CD4-positive, alpha-beta T cell (primary cell): ENCODE measurements at regions of chr21 and their contacts with region 1.

Region 1: GRCh38 chr21:43659136-43660000 is at the starts of genes HSF2BP and RRP1B:
- DNase-seq: peak; percentile 53 to 94 (median 74)
- ATAC-seq: peak; percentile 82
- H3K4me3 ChIP-seq: peak within 1 kb of the TSS; percentile 92
- H3K4me3 Mint-ChIP-seq: peak within 1 kb of the TSS; percentile 84
- H3K27ac ChIP-seq: peak within 1 kb of the TSS; percentile 82 to 84
- H3K27ac Mint-ChIP-seq: peak within 1 kb of the TSS; percentile 87
- H3K4me1 ChIP-seq: peaks cover 48% of the 10 kb centered on the region
- H3K4me1 Mint-ChIP-seq: peaks cover 44% of the 10 kb centered on the region
- H3K27me3 ChIP-seq: no peaks in the 10 kb centered on the region
- H3K27me3 Mint-ChIP-seq: no peaks in the 10 kb centered on the region
- CTCF ChIP-seq: no peak
- total RNA-seq, gene HSF2BP: 0.59 to 0.93 TPM
- total RNA-seq, gene RRP1B: 18.6 to 19.2 TPM

Region 2: DNA sequence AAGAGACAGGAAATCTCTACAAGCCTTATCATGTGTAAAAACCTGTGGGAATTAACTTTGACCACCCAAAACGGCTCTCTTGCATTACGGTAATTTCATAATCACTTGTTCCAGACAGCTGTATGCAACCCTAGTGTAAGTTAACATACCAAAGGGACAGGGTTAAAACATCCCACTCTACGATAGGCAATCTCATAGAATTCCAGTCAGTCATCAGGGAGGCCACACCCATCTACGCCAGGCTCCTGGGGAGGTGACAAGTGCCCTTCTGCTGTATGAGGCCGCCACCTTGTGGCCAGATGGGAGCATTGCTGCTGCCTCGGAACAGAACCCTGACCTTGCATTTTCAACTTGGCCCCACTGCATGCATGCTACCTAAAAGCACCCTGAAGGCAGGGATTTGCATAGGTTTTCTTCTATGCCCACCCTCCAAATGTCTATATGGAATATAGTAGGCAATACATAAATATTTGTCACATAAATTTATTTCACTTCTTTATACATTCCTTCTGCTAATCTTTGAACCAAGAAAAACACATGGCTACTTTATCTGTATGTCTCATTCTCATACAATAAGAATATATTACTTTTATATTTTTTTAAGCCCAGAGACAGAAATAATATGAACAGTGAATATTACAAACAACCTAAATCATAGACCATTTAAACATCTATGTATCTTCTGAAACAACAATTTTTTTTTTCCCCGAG is 12.7 kb before region 1 on chr21:
- CTCF ChIA-PET with region 1: no interaction called
- POLR2A ChIA-PET with region 1: interaction called, 5 read pairs
- intact Hi-C with region 1: loop called in 1 of 2 experiments (anchors 1 kb)
- DNase-seq: peak; percentile 76 to 92 (median 80)
- ATAC-seq: peak; percentile 99
- H3K4me3 ChIP-seq: no peak overlapping the region
- H3K4me3 Mint-ChIP-seq: no peak overlapping the region
- H3K27ac ChIP-seq: no peak overlapping the region
- H3K27ac Mint-ChIP-seq: no peak overlapping the region
- H3K4me1 ChIP-seq: peaks cover 3% of the 10 kb centered on the region
- H3K4me1 Mint-ChIP-seq: peaks cover 18% of the 10 kb centered on the region
- H3K27me3 ChIP-seq: no peaks in the 10 kb centered on the region
- H3K27me3 Mint-ChIP-seq: no peaks in the 10 kb centered on the region
- CTCF ChIP-seq: peak; percentile 99

Region 3: GRCh38 chr21:43718872-43719747 is 59.7 kb after region 1 on chr21 and contains the start of gene PDXK:
- CTCF ChIA-PET with region 1: no interaction called
- POLR2A ChIA-PET with region 1: interaction called, 22 read pairs
- intact Hi-C with region 1: loop called in 1 of 2 experiments (anchors 5 kb)
- DNase-seq: peak; percentile 49 to 93 (median 68)
- ATAC-seq: peak; percentile 81
- H3K4me3 ChIP-seq: peak within 1 kb of the TSS; percentile 94
- H3K4me3 Mint-ChIP-seq: peak within 1 kb of the TSS; percentile 94
- H3K27ac ChIP-seq: peak within 1 kb of the TSS; percentile 15 to 53
- H3K27ac Mint-ChIP-seq: peak within 1 kb of the TSS; percentile 86
- H3K4me1 ChIP-seq: peaks cover 38% of the 10 kb centered on the region
- H3K4me1 Mint-ChIP-seq: peaks cover 28% of the 10 kb centered on the region
- H3K27me3 ChIP-seq: no peaks in the 10 kb centered on the region
- H3K27me3 Mint-ChIP-seq: no peaks in the 10 kb centered on the region
- CTCF ChIP-seq: no peak
- total RNA-seq, gene PDXK: 74.8 to 77.0 TPM

Region 4: DNA sequence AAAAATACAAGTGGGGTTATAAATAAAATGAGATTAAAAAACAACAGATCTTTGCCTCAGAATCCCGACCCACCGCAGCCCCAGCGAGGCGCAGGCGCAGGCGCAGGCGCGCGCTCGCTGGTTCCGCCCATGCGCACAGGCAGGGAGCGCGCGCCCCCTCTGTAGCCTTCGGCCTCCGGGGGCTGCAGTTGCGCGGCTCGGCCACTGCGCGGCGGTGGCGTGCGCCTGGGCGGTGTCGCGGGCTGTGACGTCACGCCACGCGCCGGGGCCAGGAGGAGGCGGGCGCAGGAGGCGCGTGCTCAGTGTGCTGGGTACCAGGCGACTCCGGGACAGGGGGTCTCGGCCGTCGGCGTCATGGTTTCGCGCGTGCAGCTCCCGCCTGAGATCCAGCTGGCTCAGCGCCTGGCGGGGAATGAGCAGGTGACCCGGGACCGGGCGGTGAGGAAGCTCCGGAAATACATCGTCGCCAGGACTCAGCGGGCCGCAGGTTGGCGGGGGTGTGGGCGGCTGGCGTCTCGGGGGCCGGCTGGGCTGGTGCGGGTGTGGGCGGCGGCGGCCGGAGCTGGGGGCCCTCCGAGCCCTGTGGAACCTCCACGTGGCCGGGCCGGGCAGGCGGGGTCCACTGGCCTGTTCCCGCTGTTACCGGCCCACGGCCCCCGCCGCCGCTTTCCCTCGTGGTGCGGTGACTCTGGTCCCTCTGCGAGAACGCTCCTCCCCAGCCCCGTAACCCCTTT is 130.1 kb after region 1 on chr21 and contains the start of gene RRP1:
- CTCF ChIA-PET with region 1: no interaction called
- POLR2A ChIA-PET with region 1: no interaction called
- intact Hi-C with region 1: loop called in 1 of 2 experiments (anchors 5 kb)
- DNase-seq: peak; percentile 85 to 98 (median 94)
- ATAC-seq: peak; percentile 93
- H3K4me3 ChIP-seq: peak within 1 kb of the TSS; percentile 76
- H3K4me3 Mint-ChIP-seq: peak within 1 kb of the TSS; percentile 95
- H3K27ac ChIP-seq: peak within 1 kb of the TSS; percentile 44 to 55
- H3K27ac Mint-ChIP-seq: peak within 1 kb of the TSS; percentile 84
- H3K4me1 ChIP-seq: peaks cover 27% of the 10 kb centered on the region
- H3K4me1 Mint-ChIP-seq: peaks cover 18% of the 10 kb centered on the region
- H3K27me3 ChIP-seq: no peaks in the 10 kb centered on the region
- H3K27me3 Mint-ChIP-seq: no peaks in the 10 kb centered on the region
- CTCF ChIP-seq: peak; percentile 92
- total RNA-seq, gene RRP1: 27.7 to 29.0 TPM